MCF 10A (cell line): ENCODE measurements at regions of chr19 and their contacts with region 1.

Region 1: DNA sequence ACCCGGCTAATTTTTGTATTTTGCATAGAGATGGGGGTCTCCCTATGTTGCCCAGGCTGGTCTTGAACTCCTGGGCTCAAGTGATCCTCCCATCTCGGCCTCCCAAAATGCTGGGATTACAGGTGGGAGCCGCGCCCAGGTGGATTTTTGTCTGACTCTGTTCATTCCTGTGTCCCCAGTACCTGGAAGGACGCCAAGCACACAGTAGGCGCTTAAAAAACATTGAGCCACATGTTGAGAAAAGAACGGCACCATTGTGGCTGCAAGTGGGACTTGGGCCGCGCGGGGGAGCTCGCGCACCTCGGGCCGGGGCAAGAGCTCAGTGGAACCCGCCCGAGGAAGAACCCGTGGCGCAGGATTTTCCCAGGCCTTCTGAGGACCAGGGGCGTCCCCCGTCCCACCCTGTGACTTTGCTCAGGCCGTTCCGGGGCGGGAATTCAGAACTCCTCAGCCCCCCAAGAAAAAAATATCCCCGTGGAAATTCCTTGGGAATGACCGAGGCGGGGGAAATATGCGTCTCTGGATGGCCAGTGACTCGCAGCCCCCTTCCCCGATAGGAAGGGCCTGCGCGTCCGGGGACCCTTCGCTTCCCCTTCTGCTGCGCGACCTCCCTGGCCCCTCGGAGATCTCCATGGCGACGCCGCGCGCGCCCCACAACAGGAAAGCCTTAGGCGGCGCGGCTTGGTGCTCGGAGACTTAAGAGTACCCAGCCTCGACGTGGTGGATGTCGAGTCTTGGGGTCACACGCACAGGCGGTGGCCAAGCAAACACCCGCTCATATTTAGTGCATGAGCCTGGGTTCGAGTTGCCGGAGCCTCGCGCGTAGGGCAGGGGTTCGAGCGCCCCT is 1.4 kb upstream of the ICAM1 start:
- DNase-seq: peak; percentile 78
- H3K4me3 Mint-ChIP-seq: peak overlapping the region; percentile 54
- H3K27ac Mint-ChIP-seq: peak overlapping the region; percentile 16
- H3K4me1 Mint-ChIP-seq: no peaks in the 10 kb centered on the region
- H3K27me3 Mint-ChIP-seq: no peaks in the 10 kb centered on the region
- CTCF ChIP-seq: peak; percentile 95

Region 2: GRCh38 chr19:10189616-10190015 is 79.9 kb before region 1 on chr19:
- CTCF ChIA-PET with region 1: no interaction called
- POLR2A ChIA-PET with region 1: no interaction called
- intact Hi-C with region 1: no loop called
- DNase-seq: no peak
- H3K4me3 Mint-ChIP-seq: no peak overlapping the region
- H3K27ac Mint-ChIP-seq: no peak overlapping the region
- H3K4me1 Mint-ChIP-seq: no peaks in the 10 kb centered on the region
- H3K27me3 Mint-ChIP-seq: no peaks in the 10 kb centered on the region
- CTCF ChIP-seq: no peak

Region 3: GRCh38 chr19:10259162-10259905 is 10.2 kb before region 1 on chr19:
- CTCF ChIA-PET with region 1: interaction called, 42 read pairs
- POLR2A ChIA-PET with region 1: interaction called, 17 read pairs
- intact Hi-C with region 1: no loop called
- DNase-seq: peak; percentile 92
- H3K4me3 Mint-ChIP-seq: no peak overlapping the region
- H3K27ac Mint-ChIP-seq: no peak overlapping the region
- H3K4me1 Mint-ChIP-seq: no peaks in the 10 kb centered on the region
- H3K27me3 Mint-ChIP-seq: no peaks in the 10 kb centered on the region
- CTCF ChIP-seq: peak; percentile 70

Region 4: GRCh38 chr19:10279737-10280442 is 10.3 kb after region 1 on chr19:
- CTCF ChIA-PET with region 1: interaction called, 13 read pairs
- POLR2A ChIA-PET with region 1: interaction called, 3 read pairs
- intact Hi-C with region 1: no loop called
- DNase-seq: no peak
- H3K4me3 Mint-ChIP-seq: no peak overlapping the region
- H3K27ac Mint-ChIP-seq: no peak overlapping the region
- H3K4me1 Mint-ChIP-seq: peaks cover 8% of the 10 kb centered on the region
- H3K27me3 Mint-ChIP-seq: no peaks in the 10 kb centered on the region
- CTCF ChIP-seq: no peak

Region 5: GRCh38 chr19:10380313-10381102 is 111.0 kb after region 1 on chr19 and contains the start of gene TYK2:
- CTCF ChIA-PET with region 1: interaction called, 7 read pairs
- POLR2A ChIA-PET with region 1: interaction called, 13 read pairs
- intact Hi-C with region 1: loop called (anchors 2 kb)
- DNase-seq: peak; percentile 100
- H3K4me3 Mint-ChIP-seq: peak within 1 kb of the TSS; percentile 89
- H3K27ac Mint-ChIP-seq: peak within 1 kb of the TSS; percentile 80
- H3K4me1 Mint-ChIP-seq: peaks cover 6% of the 10 kb centered on the region
- H3K27me3 Mint-ChIP-seq: no peaks in the 10 kb centered on the region
- CTCF ChIP-seq: no peak
- total RNA-seq, gene TYK2: 75.0 and 83.7 TPM in 2 replicates

Region 6: GRCh38 chr19:10388957-10389356 is 119.4 kb after region 1 on chr19:
- CTCF ChIA-PET with region 1: interaction called, 103 read pairs
- POLR2A ChIA-PET with region 1: interaction called, 33 read pairs
- intact Hi-C with region 1: loop called (anchors 1 kb)
- DNase-seq: peak; percentile 89
- H3K4me3 Mint-ChIP-seq: no peak overlapping the region
- H3K27ac Mint-ChIP-seq: no peak overlapping the region
- H3K4me1 Mint-ChIP-seq: peaks cover 5% of the 10 kb centered on the region
- H3K27me3 Mint-ChIP-seq: no peaks in the 10 kb centered on the region
- CTCF ChIP-seq: peak; percentile 89